MCF 10A (cell line): ENCODE measurements at regions of chr7 and their contacts with region 1.

Region 1: DNA sequence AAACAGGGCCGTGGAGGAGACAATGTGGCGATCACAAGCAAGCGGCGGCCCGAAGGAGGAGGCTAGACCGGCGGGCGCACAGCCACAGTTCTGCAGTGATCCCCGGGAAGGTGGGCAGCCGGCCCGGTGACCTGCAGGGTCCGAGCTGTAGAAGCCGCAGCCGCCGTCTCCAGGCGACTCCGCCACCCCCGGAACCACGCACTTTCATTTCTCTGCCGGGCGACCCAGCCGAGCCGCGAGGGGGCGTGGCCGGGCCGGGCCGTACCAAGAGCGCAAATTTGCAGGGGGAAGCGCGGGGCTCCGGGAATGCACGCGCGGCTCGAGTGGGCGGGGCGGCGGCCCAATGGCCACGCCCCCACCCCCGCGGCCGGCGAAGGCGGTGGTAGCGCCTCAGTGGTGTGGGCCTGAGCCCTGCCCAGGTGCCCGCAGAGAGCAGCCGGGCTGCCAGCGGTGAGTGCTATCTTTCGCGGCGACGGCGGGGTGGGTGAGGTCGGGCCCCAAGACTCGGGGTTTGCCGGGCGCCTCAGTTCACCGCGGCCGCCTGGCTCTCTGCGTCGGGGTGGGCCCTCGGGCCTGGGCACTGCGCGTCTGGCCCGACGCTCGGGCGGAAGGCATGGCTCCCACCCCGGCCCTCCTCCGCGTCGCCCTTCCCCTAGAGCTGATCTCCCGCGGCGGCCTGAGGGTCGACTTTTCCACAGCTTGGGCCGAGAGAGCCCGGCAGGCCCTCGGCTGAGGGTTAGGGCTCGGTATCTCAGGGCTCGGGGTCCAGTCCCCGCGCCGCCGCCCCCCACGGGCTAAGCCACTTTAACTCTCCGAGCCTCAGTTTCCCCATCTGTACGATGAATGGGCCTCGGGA is at the start of gene POR:
- DNase-seq: peak; percentile 89
- H3K4me3 Mint-ChIP-seq: peak within 1 kb of the TSS; percentile 83
- H3K27ac Mint-ChIP-seq: peak within 1 kb of the TSS; percentile 87
- H3K4me1 Mint-ChIP-seq: peaks cover 10% of the 10 kb centered on the region
- H3K27me3 Mint-ChIP-seq: no peaks in the 10 kb centered on the region
- CTCF ChIP-seq: no peak
- total RNA-seq, gene POR: 45.1 and 58.0 TPM in 2 replicates

Region 2: GRCh38 chr7:75892634-75893272 is 22.2 kb before region 1 on chr7:
- CTCF ChIA-PET with region 1: interaction called, 4 read pairs
- POLR2A ChIA-PET with region 1: interaction called, 14 read pairs
- intact Hi-C with region 1: no loop called
- DNase-seq: peak; percentile 32
- H3K4me3 Mint-ChIP-seq: peak overlapping the region; percentile 2
- H3K27ac Mint-ChIP-seq: peak overlapping the region; percentile 66
- H3K4me1 Mint-ChIP-seq: peaks cover 7% of the 10 kb centered on the region
- H3K27me3 Mint-ChIP-seq: no peaks in the 10 kb centered on the region
- CTCF ChIP-seq: no peak

Region 3: DNA sequence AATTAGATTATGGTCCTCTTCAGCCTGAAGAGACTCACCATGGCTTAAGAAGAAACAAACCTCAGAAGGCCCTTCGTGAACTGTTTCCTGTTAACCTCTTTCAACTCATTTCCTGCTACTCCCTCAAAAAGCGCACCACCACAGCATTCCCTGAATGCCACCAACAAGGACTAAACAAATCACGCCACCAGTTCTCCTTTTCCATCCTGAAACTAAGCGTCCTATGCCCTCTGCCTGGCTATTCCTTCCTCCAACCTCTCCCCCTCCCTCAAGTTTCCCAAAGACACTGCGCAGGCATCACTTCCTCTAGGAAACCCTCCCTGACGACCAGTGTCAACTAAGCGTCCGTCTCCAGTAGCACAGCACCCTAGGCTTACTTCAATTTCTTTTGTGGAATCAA is 431.8 kb after region 1 on chr7:
- CTCF ChIA-PET with region 1: no interaction called
- POLR2A ChIA-PET with region 1: no interaction called
- intact Hi-C with region 1: no loop called
- DNase-seq: no peak
- H3K4me3 Mint-ChIP-seq: no peak overlapping the region
- H3K27ac Mint-ChIP-seq: peak overlapping the region; percentile 57
- H3K4me1 Mint-ChIP-seq: peaks cover 51% of the 10 kb centered on the region
- H3K27me3 Mint-ChIP-seq: no peaks in the 10 kb centered on the region
- CTCF ChIP-seq: no peak